ENCODE measurements at regions of chr17 and their contacts with region 1.

Region 1: GRCh38 chr17:39069114-39069756 is 82.2 kb downstream of the PLXDC1 start:
- DNase-seq: peak in 7 of 9 donors; percentile 31 to 65 (median 49)
- ATAC-seq: peak; percentile 86
- H3K4me3 ChIP-seq: no peak overlapping the region
- H3K4me3 Mint-ChIP-seq: no peak overlapping the region
- H3K27ac ChIP-seq: no peak overlapping the region
- H3K27ac Mint-ChIP-seq: peak overlapping the region in 6 of 9 donors; percentile 10 to 88 (median 54)
- H3K4me1 ChIP-seq: no peaks in the 10 kb centered on the region
- H3K4me1 Mint-ChIP-seq: peaks cover 5 to 18% (median 7%) of the 10 kb centered on the region in 7 donors
- H3K27me3 ChIP-seq: no peaks in the 10 kb centered on the region
- H3K27me3 Mint-ChIP-seq: no peaks in the 10 kb centered on the region

Region 2: GRCh38 chr17:39094607-39095308 is 25.5 kb after region 1 on chr17:
- CTCF ChIA-PET with region 1: interaction called, 8 read pairs
- POLR2A ChIA-PET with region 1: interaction called, 4 read pairs
- intact Hi-C with region 1: loop called in 1 of 2 experiments (anchors 1 kb)
- DNase-seq: peak in 7 of 9 donors; percentile 28 to 62 (median 49)
- ATAC-seq: peak; percentile 60
- H3K4me3 ChIP-seq: peak overlapping the region; percentile 20
- H3K4me3 Mint-ChIP-seq: peak overlapping the region; percentile 61 to 92 (median 82)
- H3K27ac ChIP-seq: peak overlapping the region; percentile 64
- H3K27ac Mint-ChIP-seq: peak overlapping the region; percentile 81 to 97 (median 95)
- H3K4me1 ChIP-seq: peaks cover 60 to 88% of the 10 kb centered on the region in 2 donors
- H3K4me1 Mint-ChIP-seq: peaks cover 64 to 95% (median 90%) of the 10 kb centered on the region in 7 donors
- H3K27me3 ChIP-seq: no peaks in the 10 kb centered on the region
- H3K27me3 Mint-ChIP-seq: peaks cover 0 to 3% (median 0%) of the 10 kb centered on the region in 5 donors

Region 3: DNA sequence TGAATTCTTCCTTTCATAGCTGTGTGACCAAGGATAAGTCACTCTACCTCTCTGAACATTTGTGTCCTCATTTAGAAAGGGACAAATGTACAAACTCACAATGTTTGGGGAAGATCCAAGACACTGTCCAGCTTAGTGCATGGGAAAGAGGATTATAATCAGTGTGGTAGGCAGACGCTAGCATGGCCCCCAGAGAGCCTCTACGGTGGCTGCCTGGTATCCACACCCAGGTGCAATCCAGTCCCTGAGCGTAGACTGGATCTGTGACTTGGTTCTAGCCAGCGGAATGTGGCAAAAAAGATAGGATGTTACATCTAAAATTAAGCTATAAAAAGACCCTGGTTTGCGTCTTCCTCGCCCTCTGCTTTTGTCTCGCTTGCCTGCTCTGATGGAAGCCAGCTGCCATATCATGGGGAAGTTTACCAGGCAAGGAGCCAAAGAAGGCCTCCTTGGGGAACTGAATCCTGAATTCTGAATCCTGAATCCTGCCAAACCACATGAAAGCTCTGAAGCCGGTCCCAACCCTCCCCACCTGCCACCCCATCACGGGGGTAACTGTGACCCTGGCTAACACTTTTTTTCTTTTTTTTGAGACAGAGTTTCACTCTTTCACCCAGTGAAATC is 30.5 kb after region 1 on chr17:
- CTCF ChIA-PET with region 1: interaction called, 5 read pairs
- POLR2A ChIA-PET with region 1: no interaction called
- intact Hi-C with region 1: loop called in 1 of 2 experiments (anchors 1 kb)
- DNase-seq: no peak
- ATAC-seq: no peak
- H3K4me3 ChIP-seq: no peak overlapping the region
- H3K4me3 Mint-ChIP-seq: peak overlapping the region in 1 of 10 donors; percentile 48
- H3K27ac ChIP-seq: no peak overlapping the region
- H3K27ac Mint-ChIP-seq: peak overlapping the region in 6 of 9 donors; percentile 8 to 95 (median 84)
- H3K4me1 ChIP-seq: peaks cover 25 to 70% of the 10 kb centered on the region in 2 donors
- H3K4me1 Mint-ChIP-seq: peaks cover 32 to 81% (median 75%) of the 10 kb centered on the region in 7 donors
- H3K27me3 ChIP-seq: no peaks in the 10 kb centered on the region
- H3K27me3 Mint-ChIP-seq: peaks cover 0 to 3% (median 0%) of the 10 kb centered on the region in 5 donors

Region 4: DNA sequence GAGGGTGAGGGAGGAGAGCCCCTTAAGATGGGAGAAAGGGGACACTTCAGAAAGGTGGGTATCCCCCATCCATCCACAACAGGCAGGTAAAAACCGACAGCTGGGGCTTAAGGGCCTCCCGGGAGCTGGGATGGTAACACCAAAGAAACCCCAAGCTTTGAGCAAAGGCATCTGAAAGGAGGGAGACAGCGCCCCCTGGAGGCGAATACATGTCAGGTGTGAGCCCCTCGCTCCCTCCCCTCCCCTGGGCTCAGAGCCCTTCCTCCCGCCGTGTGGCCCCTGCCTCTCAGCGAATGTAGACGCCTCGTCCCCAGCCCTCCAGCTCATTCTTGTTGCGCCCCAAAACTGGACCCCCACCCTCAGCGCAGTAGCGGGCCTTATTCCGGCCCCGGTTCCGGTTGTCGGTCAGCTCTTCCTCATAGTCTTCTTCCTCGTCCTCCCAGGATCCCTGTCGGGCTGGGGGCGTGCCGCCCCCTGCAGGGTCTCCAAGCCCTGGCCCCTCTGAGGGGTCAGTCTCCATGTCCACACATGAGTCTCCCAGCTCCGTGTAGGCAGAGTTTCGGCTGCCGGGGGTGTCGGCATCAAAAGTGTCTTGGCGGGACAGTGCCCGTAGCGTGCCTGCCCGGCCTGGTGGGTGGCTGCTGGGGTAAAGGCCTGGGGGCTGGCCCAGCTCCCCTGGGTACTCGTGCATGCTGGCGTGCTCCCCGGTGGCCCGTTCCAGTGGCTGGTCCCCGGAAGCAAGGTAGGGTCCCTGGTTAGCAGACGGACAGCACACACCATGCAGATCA is 105.9 kb after region 1 on chr17:
- CTCF ChIA-PET with region 1: interaction called, 7 read pairs
- POLR2A ChIA-PET with region 1: no interaction called
- intact Hi-C with region 1: loop called in 1 of 2 experiments (anchors 1 kb)
- DNase-seq: peak; percentile 64 to 80 (median 74)
- ATAC-seq: peak; percentile 93
- H3K4me3 ChIP-seq: no peak overlapping the region
- H3K4me3 Mint-ChIP-seq: no peak overlapping the region
- H3K27ac ChIP-seq: no peak overlapping the region
- H3K27ac Mint-ChIP-seq: peak overlapping the region in 3 of 9 donors; percentile 24 to 78 (median 48)
- H3K4me1 ChIP-seq: peaks cover 0 to 8% of the 10 kb centered on the region in 2 donors
- H3K4me1 Mint-ChIP-seq: peaks cover 12 to 29% (median 20%) of the 10 kb centered on the region in 7 donors
- H3K27me3 ChIP-seq: no peaks in the 10 kb centered on the region
- H3K27me3 Mint-ChIP-seq: no peaks in the 10 kb centered on the region

Region 5: DNA sequence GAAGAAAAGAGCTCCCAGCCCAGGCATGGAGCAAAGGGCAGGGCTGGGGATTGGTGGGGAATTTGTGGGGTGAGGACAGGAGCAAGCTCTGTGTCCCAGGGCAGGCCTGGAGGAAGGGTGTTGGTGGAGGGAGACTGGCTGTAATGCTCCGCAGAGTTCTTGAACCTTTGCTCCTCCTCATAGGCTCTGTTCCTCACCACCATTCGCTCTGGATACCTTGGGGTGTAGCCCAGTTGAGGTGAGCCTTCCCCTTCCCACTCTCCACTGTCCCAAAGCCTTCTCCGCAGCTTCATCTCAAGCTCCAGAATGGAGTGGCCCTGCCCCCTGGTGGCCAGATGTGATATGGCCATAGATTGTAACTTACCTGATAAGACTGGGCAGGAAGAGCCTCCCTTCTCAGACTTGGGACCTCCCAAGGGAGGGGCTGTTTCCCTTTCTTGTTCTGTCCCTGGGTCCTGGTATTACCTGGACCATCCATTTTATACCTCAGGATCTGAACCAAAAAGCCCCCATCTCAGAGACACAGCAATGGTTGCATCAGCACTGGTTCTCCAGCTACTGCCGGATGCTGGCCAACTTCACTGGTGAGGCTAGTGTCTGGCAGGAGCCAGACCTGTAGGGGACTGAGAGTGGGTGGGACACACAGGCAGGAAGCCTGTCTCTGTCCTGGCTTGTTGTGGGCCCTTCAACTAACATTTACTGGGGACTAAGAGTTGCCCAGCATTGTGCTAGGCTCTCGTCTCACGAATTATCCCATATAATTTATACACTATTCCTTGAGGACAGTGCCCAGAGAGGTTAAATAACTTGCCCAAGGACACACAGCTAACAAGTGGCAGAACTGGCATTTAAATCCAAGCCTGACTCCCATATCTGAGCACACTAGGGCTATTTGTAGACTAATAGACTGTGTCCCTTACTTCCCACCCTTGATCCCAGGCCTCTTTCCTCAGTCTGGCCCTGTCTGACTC is 175.7 kb after region 1 on chr17:
- CTCF ChIA-PET with region 1: interaction called, 4 read pairs
- POLR2A ChIA-PET with region 1: no interaction called
- intact Hi-C with region 1: loop called in 1 of 2 experiments (anchors 1 kb)
- DNase-seq: peak; percentile 74 to 85 (median 81)
- ATAC-seq: peak; percentile 96
- H3K4me3 ChIP-seq: no peak overlapping the region
- H3K4me3 Mint-ChIP-seq: peak overlapping the region in 5 of 10 donors; percentile 12 to 61 (median 38)
- H3K27ac ChIP-seq: no peak overlapping the region
- H3K27ac Mint-ChIP-seq: peak overlapping the region in 6 of 9 donors; percentile 5 to 87 (median 66)
- H3K4me1 ChIP-seq: peaks cover 6 to 10% of the 10 kb centered on the region in 2 donors
- H3K4me1 Mint-ChIP-seq: peaks cover 7 to 16% (median 11%) of the 10 kb centered on the region in 7 donors
- H3K27me3 ChIP-seq: no peaks in the 10 kb centered on the region
- H3K27me3 Mint-ChIP-seq: peaks cover 0 to 4% (median 0%) of the 10 kb centered on the region in 5 donors

Region 6: GRCh38 chr17:39916918-39917317 is 847.7 kb after region 1 on chr17:
- CTCF ChIA-PET with region 1: no interaction called
- POLR2A ChIA-PET with region 1: no interaction called
- intact Hi-C with region 1: no loop called
- DNase-seq: no peak
- ATAC-seq: no peak
- H3K4me3 ChIP-seq: no peak overlapping the region
- H3K4me3 Mint-ChIP-seq: peak overlapping the region in 1 of 10 donors; percentile 21
- H3K27ac ChIP-seq: no peak overlapping the region
- H3K27ac Mint-ChIP-seq: peak overlapping the region in 2 of 9 donors; percentile 56 to 68
- H3K4me1 ChIP-seq: peaks cover 14 to 28% of the 10 kb centered on the region in 2 donors
- H3K4me1 Mint-ChIP-seq: peaks cover 10 to 55% (median 45%) of the 10 kb centered on the region in 7 donors
- H3K27me3 ChIP-seq: no peaks in the 10 kb centered on the region
- H3K27me3 Mint-ChIP-seq: no peaks in the 10 kb centered on the region